Activated CD4-positive, alpha-beta memory T cell treated with anti-CD3 and anti-CD28 coated beads for 36 hours (primary cell): ENCODE measurements at regions of chr9 and their contacts with region 1.

Region 1: GRCh38 chr9:69421908-69422801 is 97.1 kb downstream of the ENTREP1 start:
- DNase-seq: peak; percentile 46
- H3K4me3 Mint-ChIP-seq: no peak overlapping the region
- H3K27ac Mint-ChIP-seq: no peak overlapping the region
- H3K4me1 Mint-ChIP-seq: no peaks in the 10 kb centered on the region
- H3K27me3 Mint-ChIP-seq: peaks cover 18% of the 10 kb centered on the region

Region 2: GRCh38 chr9:68664036-68664435 is 758.1 kb before region 1 on chr9:
- CTCF ChIA-PET with region 1: no interaction called
- POLR2A ChIA-PET with region 1: no interaction called
- intact Hi-C with region 1: no loop called
- DNase-seq: no peak
- H3K4me3 Mint-ChIP-seq: no peak overlapping the region
- H3K27ac Mint-ChIP-seq: no peak overlapping the region
- H3K4me1 Mint-ChIP-seq: no peaks in the 10 kb centered on the region
- H3K27me3 Mint-ChIP-seq: peaks cover 8% of the 10 kb centered on the region

Region 3: GRCh38 chr9:69527454-69527853 is 105.3 kb after region 1 on chr9:
- CTCF ChIA-PET with region 1: no interaction called
- POLR2A ChIA-PET with region 1: no interaction called
- intact Hi-C with region 1: no loop called
- DNase-seq: no peak
- H3K4me3 Mint-ChIP-seq: no peak overlapping the region
- H3K27ac Mint-ChIP-seq: no peak overlapping the region
- H3K4me1 Mint-ChIP-seq: no peaks in the 10 kb centered on the region
- H3K27me3 Mint-ChIP-seq: peaks cover 5% of the 10 kb centered on the region

Region 4: GRCh38 chr9:69549310-69550202 is 127.4 kb after region 1 on chr9:
- CTCF ChIA-PET with region 1: interaction called, 30 read pairs
- POLR2A ChIA-PET with region 1: no interaction called
- intact Hi-C with region 1: loop called (anchors 2 kb)
- DNase-seq: peak; percentile 22
- H3K4me3 Mint-ChIP-seq: no peak overlapping the region
- H3K27ac Mint-ChIP-seq: no peak overlapping the region
- H3K4me1 Mint-ChIP-seq: peaks cover 4% of the 10 kb centered on the region
- H3K27me3 Mint-ChIP-seq: peaks cover 14% of the 10 kb centered on the region

Region 5: GRCh38 chr9:69637817-69638200 is 215.7 kb after region 1 on chr9:
- CTCF ChIA-PET with region 1: no interaction called
- POLR2A ChIA-PET with region 1: no interaction called
- intact Hi-C with region 1: no loop called
- DNase-seq: no peak
- H3K4me3 Mint-ChIP-seq: no peak overlapping the region
- H3K27ac Mint-ChIP-seq: no peak overlapping the region
- H3K4me1 Mint-ChIP-seq: no peaks in the 10 kb centered on the region
- H3K27me3 Mint-ChIP-seq: peaks cover 4% of the 10 kb centered on the region

Region 6: DNA sequence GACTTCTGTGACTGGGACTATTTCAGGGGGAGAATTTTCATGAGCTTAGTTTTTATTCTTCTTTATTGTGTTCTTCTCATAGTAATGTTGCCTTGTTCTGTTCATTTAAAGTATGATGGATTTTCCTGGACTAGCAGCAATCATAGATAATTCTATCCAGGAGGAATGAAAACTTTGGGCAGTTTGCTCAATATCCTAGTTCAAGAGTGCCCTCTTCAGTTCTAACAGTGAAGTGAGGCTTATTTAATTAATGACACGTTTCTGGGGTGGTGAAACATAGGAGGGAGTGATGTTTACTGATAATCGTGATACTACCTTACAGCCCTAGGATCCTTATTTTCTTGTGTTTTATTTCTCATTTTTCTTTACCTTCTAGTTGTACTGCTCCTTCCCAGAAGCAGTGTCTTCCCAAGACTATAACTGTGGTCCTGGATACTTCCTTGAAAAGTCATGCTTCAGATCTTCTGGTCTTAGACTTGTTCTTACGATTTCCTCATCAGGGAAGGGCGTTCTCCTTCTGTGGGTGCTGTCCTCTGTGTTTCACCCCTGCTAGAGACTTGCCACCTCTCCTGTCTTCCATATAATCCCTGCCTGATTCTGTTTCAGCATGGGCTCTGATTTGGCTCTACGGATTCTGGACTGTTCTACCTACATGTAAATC is 455.8 kb after region 1 on chr9:
- CTCF ChIA-PET with region 1: interaction called, 21 read pairs
- POLR2A ChIA-PET with region 1: no interaction called
- intact Hi-C with region 1: no loop called
- DNase-seq: no peak
- H3K4me3 Mint-ChIP-seq: no peak overlapping the region
- H3K27ac Mint-ChIP-seq: no peak overlapping the region
- H3K4me1 Mint-ChIP-seq: no peaks in the 10 kb centered on the region
- H3K27me3 Mint-ChIP-seq: peaks cover 5% of the 10 kb centered on the region

Region 7: DNA sequence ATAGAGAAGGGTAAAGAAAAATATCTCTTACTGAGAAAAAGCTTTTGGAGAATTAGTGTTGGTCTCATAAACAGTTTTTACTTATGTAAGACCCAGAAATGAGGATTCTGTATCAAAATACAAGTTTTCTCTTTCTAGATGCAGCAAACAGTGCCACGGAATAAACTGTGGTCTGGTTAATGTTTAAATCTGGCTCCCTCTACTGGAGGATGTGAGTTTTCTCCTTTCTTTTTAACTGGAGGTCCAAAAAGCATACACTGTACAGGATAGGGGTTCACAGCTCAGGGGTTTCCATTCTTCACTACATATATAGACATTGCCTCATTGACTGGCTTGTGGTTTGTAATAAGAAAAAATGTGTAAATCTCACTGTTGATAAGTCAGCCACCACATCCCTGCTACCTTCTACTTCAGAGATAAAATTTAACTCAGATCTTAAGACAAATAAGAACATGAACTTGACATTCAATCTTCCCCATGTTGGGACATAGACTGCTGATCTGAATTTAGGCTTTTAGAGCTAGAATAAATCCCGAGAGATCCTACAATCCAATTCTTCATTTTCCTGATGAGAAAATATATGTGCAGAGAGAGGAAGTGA is 497.4 kb after region 1 on chr9:
- CTCF ChIA-PET with region 1: interaction called, 28 read pairs
- POLR2A ChIA-PET with region 1: no interaction called
- intact Hi-C with region 1: loop called (anchors 2 kb)
- DNase-seq: no peak
- H3K4me3 Mint-ChIP-seq: no peak overlapping the region
- H3K27ac Mint-ChIP-seq: no peak overlapping the region
- H3K4me1 Mint-ChIP-seq: no peaks in the 10 kb centered on the region
- H3K27me3 Mint-ChIP-seq: peaks cover 3% of the 10 kb centered on the region

Region 8: GRCh38 chr9:69932901-69933300 is 510.7 kb after region 1 on chr9:
- CTCF ChIA-PET with region 1: interaction called, 3 read pairs
- POLR2A ChIA-PET with region 1: no interaction called
- intact Hi-C with region 1: loop called (anchors 5 kb)
- DNase-seq: no peak
- H3K4me3 Mint-ChIP-seq: no peak overlapping the region
- H3K27ac Mint-ChIP-seq: no peak overlapping the region
- H3K4me1 Mint-ChIP-seq: no peaks in the 10 kb centered on the region
- H3K27me3 Mint-ChIP-seq: no peaks in the 10 kb centered on the region